ENCODE measurements at regions of chr7 and their contacts with region 1.

Region 1: GRCh38 chr7:17298207-17298839 is at the start of gene AHR:
- DNase-seq: peak; percentile 62
- ATAC-seq: peak; percentile 79
- H3K4me3 ChIP-seq: peak within 1 kb of the TSS; percentile 89
- H3K27ac ChIP-seq: peak within 1 kb of the TSS; percentile 61
- H3K4me1 ChIP-seq: peaks cover 6% of the 10 kb centered on the region; the same call in 1 of the 2 replicates
- H3K27me3 ChIP-seq: no peaks in the 10 kb centered on the region
- CTCF ChIP-seq: no peak
- EP300 ChIP-seq: no peak
- POLR2A ChIP-seq: peak; percentile 89
- RAD21 ChIP-seq: no peak
- polyA plus RNA-seq, gene AHR: 1.7 to 1.9 TPM

Region 2: DNA sequence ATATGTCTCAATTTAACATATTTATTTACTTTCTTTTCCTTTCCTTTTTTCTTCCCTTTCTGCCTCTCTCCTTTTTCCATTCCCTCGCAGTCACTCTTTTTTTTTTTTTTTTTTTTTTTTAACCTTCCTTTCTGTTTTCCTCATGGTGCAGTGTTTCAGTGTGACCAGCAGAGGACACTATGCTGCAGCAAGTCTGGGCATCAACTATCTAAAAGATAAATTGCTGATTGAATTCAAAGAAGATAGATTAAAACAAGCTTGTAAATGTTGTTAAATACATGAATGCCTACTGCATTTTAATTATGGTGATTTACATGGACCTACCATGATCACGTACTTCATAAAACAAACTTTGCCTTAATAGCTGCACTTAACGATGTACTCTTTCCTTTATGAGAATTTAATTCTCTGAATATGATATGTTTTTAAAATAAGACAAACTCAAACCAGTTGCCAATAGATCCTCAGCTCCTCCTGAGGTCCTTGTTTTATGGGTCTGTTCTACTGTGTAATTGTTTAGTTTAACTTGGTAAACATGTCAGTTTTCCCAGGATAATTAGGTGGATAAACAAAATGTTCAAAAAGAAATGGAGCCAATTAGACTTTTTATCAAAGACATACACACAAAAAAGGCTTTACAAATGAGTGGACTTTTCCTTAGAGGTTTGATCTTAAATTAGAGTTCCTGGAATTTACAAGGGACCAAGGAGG is 315.5 kb before region 1 on chr7:
- CTCF ChIA-PET with region 1: interaction called, 92 read pairs
- POLR2A ChIA-PET with region 1: interaction called, 3 read pairs
- RAD21 ChIA-PET with region 1: interaction called, 62 read pairs
- SMC1A ChIA-PET with region 1: interaction called, 34 read pairs
- in situ Hi-C with region 1: loop called (anchors 5 kb)
- intact Hi-C with region 1: loop called (anchors 1 kb)
- DNase-seq: no peak
- ATAC-seq: peak; percentile 46; the same call in 2 of the 3 replicates
- H3K4me3 ChIP-seq: no peak overlapping the region
- H3K27ac ChIP-seq: no peak overlapping the region
- H3K4me1 ChIP-seq: no peaks in the 10 kb centered on the region
- H3K27me3 ChIP-seq: no peaks in the 10 kb centered on the region
- CTCF ChIP-seq: peak; percentile 84 to 93 (median 93)
- EP300 ChIP-seq: no peak
- POLR2A ChIP-seq: no peak
- RAD21 ChIP-seq: peak; percentile 99

Region 3: GRCh38 chr7:17063045-17063383 is 235.3 kb before region 1 on chr7:
- CTCF ChIA-PET with region 1: interaction called, 54 read pairs
- POLR2A ChIA-PET with region 1: no interaction called
- RAD21 ChIA-PET with region 1: interaction called, 57 read pairs
- SMC1A ChIA-PET with region 1: interaction called, 61 read pairs
- in situ Hi-C with region 1: no loop called
- intact Hi-C with region 1: loop called (anchors 2 kb)
- DNase-seq: no peak
- ATAC-seq: peak; percentile 65
- H3K4me3 ChIP-seq: no peak overlapping the region
- H3K27ac ChIP-seq: no peak overlapping the region
- H3K4me1 ChIP-seq: no peaks in the 10 kb centered on the region
- H3K27me3 ChIP-seq: no peaks in the 10 kb centered on the region
- CTCF ChIP-seq: peak in 2 of 3 experiments; percentile 4 to 8; a peak in 2 of 6 replicates
- EP300 ChIP-seq: no peak
- POLR2A ChIP-seq: no peak
- RAD21 ChIP-seq: peak; percentile 31; the same call in 1 of the 2 replicates

Region 4: GRCh38 chr7:17185690-17186070 is 112.6 kb before region 1 on chr7:
- CTCF ChIA-PET with region 1: interaction called, 3 read pairs
- POLR2A ChIA-PET with region 1: interaction called, 11 read pairs
- RAD21 ChIA-PET with region 1: interaction called, 8 read pairs
- SMC1A ChIA-PET with region 1: interaction called, 6 read pairs
- in situ Hi-C with region 1: no loop called
- intact Hi-C with region 1: loop called (anchors 5 kb)
- DNase-seq: peak; percentile 59
- ATAC-seq: peak; percentile 99
- H3K4me3 ChIP-seq: no peak overlapping the region
- H3K27ac ChIP-seq: 0 out of 2 replicates have a peak overlapping the region, but pooled peaks have one; percentile 4
- H3K4me1 ChIP-seq: peaks cover 4% of the 10 kb centered on the region
- H3K27me3 ChIP-seq: no peaks in the 10 kb centered on the region
- CTCF ChIP-seq: no peak
- EP300 ChIP-seq: peak in 1 of 2 experiments; percentile 92; a peak in 3 of 4 replicates
- POLR2A ChIP-seq: no peak
- RAD21 ChIP-seq: peak; percentile 19; the same call in 1 of the 2 replicates

Region 5: GRCh38 chr7:17492437-17492836 is 194.1 kb after region 1 on chr7:
- CTCF ChIA-PET with region 1: interaction called, 5 read pairs
- POLR2A ChIA-PET with region 1: interaction called, 3 read pairs
- RAD21 ChIA-PET with region 1: interaction called, 10 read pairs
- SMC1A ChIA-PET with region 1: interaction called, 9 read pairs
- in situ Hi-C with region 1: no loop called
- intact Hi-C with region 1: no loop called
- DNase-seq: peak; percentile 41
- ATAC-seq: peak; percentile 83
- H3K4me3 ChIP-seq: no peak overlapping the region
- H3K27ac ChIP-seq: no peak overlapping the region
- H3K4me1 ChIP-seq: no peaks in the 10 kb centered on the region
- H3K27me3 ChIP-seq: no peaks in the 10 kb centered on the region
- CTCF ChIP-seq: no peak
- EP300 ChIP-seq: peak; percentile 77 to 95
- POLR2A ChIP-seq: no peak
- RAD21 ChIP-seq: no peak

Region 6: GRCh38 chr7:17646253-17646956 is 348.1 kb after region 1 on chr7:
- CTCF ChIA-PET with region 1: interaction called, 17 read pairs
- POLR2A ChIA-PET with region 1: no interaction called
- RAD21 ChIA-PET with region 1: interaction called, 12 read pairs
- SMC1A ChIA-PET with region 1: interaction called, 9 read pairs
- in situ Hi-C with region 1: loop called (anchors 5 kb)
- intact Hi-C with region 1: no loop called
- DNase-seq: no peak
- ATAC-seq: no peak
- H3K4me3 ChIP-seq: no peak overlapping the region
- H3K27ac ChIP-seq: no peak overlapping the region
- H3K4me1 ChIP-seq: no peaks in the 10 kb centered on the region
- H3K27me3 ChIP-seq: no peaks in the 10 kb centered on the region; a peak in 2 of 4 replicates
- CTCF ChIP-seq: peak in 1 of 3 experiments; percentile 11; a peak in 2 of 6 replicates
- EP300 ChIP-seq: no peak
- POLR2A ChIP-seq: no peak
- RAD21 ChIP-seq: peak; percentile 42

Region 7: GRCh38 chr7:17696443-17696842 is 398.1 kb after region 1 on chr7:
- CTCF ChIA-PET with region 1: no interaction called
- POLR2A ChIA-PET with region 1: no interaction called
- RAD21 ChIA-PET with region 1: no interaction called
- SMC1A ChIA-PET with region 1: no interaction called
- in situ Hi-C with region 1: no loop called
- intact Hi-C with region 1: no loop called
- DNase-seq: no peak
- ATAC-seq: no peak
- H3K4me3 ChIP-seq: no peak overlapping the region
- H3K27ac ChIP-seq: no peak overlapping the region
- H3K4me1 ChIP-seq: no peaks in the 10 kb centered on the region
- H3K27me3 ChIP-seq: no peaks in the 10 kb centered on the region
- CTCF ChIP-seq: no peak
- EP300 ChIP-seq: no peak
- POLR2A ChIP-seq: no peak
- RAD21 ChIP-seq: no peak

Measured in GM12878 (cell line).